Head of caudate nucleus (tissue), 42 donors: ENCODE measurements at regions of chr5 and their contacts with region 1.

Region 1: DNA sequence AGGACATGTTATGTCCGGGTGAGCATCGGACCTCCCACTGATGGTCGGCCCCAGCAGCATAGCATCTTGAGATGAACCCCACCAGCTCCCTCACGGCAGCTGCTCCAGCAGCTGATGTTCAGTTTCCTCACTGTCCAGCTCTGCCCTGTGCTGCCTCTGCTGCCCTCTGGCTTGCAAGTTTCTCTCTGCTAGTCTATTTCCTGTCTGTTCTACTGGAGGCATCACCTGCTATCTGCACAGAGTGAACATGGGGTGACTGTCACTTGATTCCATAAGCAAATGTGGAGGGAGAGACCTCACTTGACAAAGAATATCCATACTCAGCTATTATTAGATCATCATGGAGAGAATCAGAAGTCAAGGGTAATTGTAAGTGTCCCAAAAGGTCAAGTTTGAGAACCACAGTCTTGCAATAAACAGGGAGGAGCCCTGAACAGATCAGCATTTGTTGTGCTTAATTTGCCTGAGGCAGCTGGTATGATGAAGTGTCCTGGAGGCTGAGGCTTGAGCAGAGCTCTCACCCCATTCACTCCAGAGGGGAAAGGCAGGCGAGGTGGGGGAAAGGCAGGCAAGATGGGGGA is 702.8 kb downstream of the SEMA5A start:
- DNase-seq: peak; percentile 45 to 89 (median 76)

Region 2: GRCh38 chr5:8700222-8700621 is 142.8 kb before region 1 on chr5:
- intact Hi-C with region 1: no loop called
- DNase-seq: no peak

Region 3: GRCh38 chr5:8756498-8757084 is 86.5 kb before region 1 on chr5:
- intact Hi-C with region 1: loop called (anchors 10 kb)
- DNase-seq: peak in 37 of 42 donors; percentile 18 to 85 (median 58)

Region 4: GRCh38 chr5:8864053-8864452 is 21.0 kb after region 1 on chr5:
- intact Hi-C with region 1: no loop called
- DNase-seq: no peak

Region 5: DNA sequence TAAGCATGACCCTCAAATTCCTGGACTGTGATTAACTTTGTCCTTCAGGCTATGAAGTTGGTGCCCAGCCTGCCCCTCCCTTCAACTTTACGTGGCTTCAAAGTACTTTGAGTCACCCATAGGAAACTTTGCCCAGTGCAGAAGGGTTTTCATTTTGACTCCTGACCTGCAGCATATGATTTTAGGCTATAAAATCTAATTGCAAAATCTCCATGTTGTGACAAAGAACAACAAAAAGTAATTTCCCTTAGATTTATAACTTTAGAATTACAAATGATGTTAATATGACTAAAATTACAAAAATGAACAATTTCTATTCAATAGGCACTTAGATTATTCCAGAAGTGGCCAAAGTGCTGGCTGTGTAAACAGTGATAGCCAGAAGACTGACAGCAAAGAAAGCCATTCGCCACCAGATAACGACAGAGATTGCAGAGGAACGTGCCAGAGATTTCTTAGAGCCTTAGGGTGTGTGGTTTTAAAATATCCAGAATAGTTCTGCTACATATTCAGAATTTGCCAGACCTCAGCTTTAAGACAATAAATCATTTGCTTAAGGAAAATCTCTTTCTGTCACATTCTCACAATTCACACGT is 505.4 kb after region 1 on chr5:
- intact Hi-C with region 1: no loop called
- DNase-seq: no peak